A673 (cell line): ENCODE measurements at regions of chr11 and their contacts with region 1.

Region 1: GRCh38 chr11:126115816-126116331 is 53.2 kb upstream of the CDON start:
- DNase-seq: peak; percentile 48
- H3K4me3 ChIP-seq: no peak overlapping the region
- H3K27ac ChIP-seq: peak overlapping the region; percentile 70
- H3K4me1 ChIP-seq: peaks cover 41% of the 10 kb centered on the region
- H3K27me3 ChIP-seq: no peaks in the 10 kb centered on the region
- CTCF ChIP-seq: peak; percentile 35; the same call in 1 of the 2 replicates

Region 2: DNA sequence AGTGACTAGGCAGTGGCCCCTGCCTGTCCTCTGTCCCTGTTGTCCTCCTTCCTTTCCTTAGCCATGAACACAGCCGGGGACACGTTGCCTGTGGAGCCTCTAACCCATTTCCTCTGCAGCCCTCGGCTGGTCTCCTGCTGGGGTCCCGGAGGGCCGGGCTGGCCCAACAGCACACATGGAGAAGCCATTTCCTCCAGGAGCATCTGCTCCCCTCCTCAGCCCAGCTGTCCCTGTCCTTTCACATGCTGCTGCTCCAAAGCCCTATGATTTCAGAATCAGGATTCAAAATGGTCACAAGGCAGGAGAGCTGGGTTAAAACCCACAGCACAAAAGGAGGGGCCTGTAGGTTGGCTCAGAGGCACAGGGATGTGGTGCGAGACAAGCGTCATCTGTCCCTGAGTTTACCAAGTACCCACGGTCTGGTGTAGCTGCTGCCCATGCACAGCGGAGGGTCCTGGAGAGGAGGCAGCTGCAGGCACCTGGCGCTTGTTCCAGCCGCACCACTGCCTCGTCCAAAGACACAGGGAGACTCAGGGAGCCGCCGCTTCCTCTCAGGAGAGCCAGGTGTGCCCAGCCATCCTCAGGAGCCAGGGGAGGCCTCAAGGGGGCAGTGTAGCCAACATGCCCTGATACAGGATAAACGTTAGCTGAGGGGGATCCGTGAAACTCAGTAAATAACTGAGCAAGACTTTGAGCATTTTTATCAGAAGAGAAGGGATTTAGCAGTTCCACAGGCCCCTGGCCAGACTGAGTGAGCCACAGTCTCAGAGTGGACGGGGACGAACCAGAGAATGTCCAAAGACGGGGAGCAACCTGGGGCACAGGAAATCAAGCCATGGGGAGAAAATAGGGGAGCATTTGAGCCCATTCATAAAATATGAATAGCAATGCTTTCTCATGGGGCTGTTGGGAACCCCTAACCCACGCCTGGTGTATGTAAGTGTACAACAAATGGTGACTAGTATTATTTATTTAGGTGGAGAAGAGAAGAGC is 174.0 kb before region 1 on chr11:
- CTCF ChIA-PET with region 1: interaction called, 11 read pairs
- POLR2A ChIA-PET with region 1: no interaction called
- intact Hi-C with region 1: no loop called
- DNase-seq: peak; percentile 66
- H3K4me3 ChIP-seq: no peak overlapping the region
- H3K27ac ChIP-seq: no peak overlapping the region
- H3K4me1 ChIP-seq: no peaks in the 10 kb centered on the region
- H3K27me3 ChIP-seq: no peaks in the 10 kb centered on the region
- CTCF ChIP-seq: peak; percentile 89

Region 3: GRCh38 chr11:126132319-126132718 is 16.4 kb after region 1 on chr11:
- CTCF ChIA-PET with region 1: no interaction called
- POLR2A ChIA-PET with region 1: interaction called, 16 read pairs
- intact Hi-C with region 1: no loop called
- DNase-seq: peak; percentile 54
- H3K4me3 ChIP-seq: no peak overlapping the region
- H3K27ac ChIP-seq: no peak overlapping the region
- H3K4me1 ChIP-seq: peaks cover 56% of the 10 kb centered on the region
- H3K27me3 ChIP-seq: no peaks in the 10 kb centered on the region
- CTCF ChIP-seq: no peak

Region 4: DNA sequence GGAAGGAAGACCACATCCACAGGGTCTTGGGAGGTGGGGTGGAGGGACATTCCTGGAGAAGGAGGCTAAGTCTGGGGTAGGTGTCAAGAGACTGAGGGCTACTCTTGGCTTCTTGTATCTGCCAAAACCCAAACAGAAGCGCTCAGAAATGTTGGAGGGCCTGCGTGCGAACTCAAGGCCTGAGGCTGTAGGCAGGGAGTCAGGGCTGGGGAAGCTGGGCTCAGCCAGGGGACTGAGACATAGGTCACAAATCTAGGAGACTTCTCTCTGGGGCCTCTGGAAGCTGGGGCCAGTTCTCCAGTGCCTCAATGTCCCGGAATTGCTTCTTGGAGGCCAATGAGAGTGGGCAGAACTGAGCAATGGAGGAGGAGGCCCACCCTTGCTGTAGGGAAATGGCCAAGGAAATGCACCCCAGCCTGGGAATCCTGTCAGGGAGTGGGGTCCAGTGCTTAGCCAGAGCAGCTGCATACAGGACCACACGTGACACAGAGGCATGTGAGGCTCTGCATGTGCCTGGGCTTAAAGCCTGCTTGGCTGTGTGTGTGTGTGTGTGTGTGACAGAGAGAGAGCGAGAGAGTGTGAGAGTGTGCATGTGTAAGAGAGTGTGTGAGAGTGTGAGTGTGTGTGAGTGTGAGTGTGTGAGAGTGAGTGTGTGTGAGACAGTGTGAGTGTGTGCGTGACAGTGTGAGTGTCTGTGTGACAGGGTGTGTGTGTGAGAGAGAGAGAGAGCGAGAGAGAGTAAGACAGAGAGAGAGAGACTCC is 380.9 kb after region 1 on chr11:
- CTCF ChIA-PET with region 1: no interaction called
- POLR2A ChIA-PET with region 1: no interaction called
- intact Hi-C with region 1: no loop called
- DNase-seq: no peak
- H3K4me3 ChIP-seq: no peak overlapping the region
- H3K27ac ChIP-seq: no peak overlapping the region
- H3K4me1 ChIP-seq: peaks cover 8% of the 10 kb centered on the region
- H3K27me3 ChIP-seq: no peaks in the 10 kb centered on the region
- CTCF ChIP-seq: no peak